Breast epithelium (tissue), 4 donors: ENCODE measurements at regions of chr18 and their contacts with region 1.

Region 1: DNA sequence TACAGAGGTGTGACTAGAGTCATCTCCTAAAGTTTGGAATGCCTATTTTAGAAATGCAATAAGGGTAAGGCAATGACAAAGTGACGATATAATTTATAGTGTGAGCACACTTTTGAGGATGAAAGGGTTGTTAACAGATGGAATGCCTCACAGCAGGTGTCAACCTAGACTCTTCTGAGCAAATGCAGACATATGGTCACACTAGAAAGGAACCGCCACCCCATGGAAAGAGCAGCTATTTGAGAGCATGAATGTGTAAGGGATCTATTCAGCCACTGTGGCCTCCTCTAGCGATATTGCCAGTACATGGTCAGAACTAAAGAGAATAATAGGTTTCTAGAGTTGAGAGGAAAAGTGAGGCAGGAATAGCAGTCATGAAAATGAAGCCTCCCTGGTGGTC is 18.5 kb downstream of the DSG2 start:
- DNase-seq: no peak
- H3K4me3 ChIP-seq: no peak overlapping the region
- H3K27ac ChIP-seq: no peak overlapping the region
- H3K4me1 ChIP-seq: peaks cover 0 to 12% of the 10 kb centered on the region in 2 donors
- H3K27me3 ChIP-seq: no peaks in the 10 kb centered on the region
- CTCF ChIP-seq: no peak
- POLR2A ChIP-seq: no peak

Region 2: GRCh38 chr18:30971338-30971956 is 545.0 kb before region 1 on chr18:
- intact Hi-C with region 1: no loop called
- DNase-seq: no peak
- H3K4me3 ChIP-seq: no peak overlapping the region
- H3K27ac ChIP-seq: no peak overlapping the region
- H3K4me1 ChIP-seq: no peaks in the 10 kb centered on the region
- H3K27me3 ChIP-seq: no peaks in the 10 kb centered on the region
- CTCF ChIP-seq: peak; percentile 40 to 59 (median 56)
- POLR2A ChIP-seq: no peak

Region 3: GRCh38 chr18:31325051-31325450 is 191.4 kb before region 1 on chr18:
- intact Hi-C with region 1: no loop called
- DNase-seq: no peak
- H3K4me3 ChIP-seq: no peak overlapping the region
- H3K27ac ChIP-seq: no peak overlapping the region
- H3K4me1 ChIP-seq: no peaks in the 10 kb centered on the region
- H3K27me3 ChIP-seq: no peaks in the 10 kb centered on the region
- CTCF ChIP-seq: no peak
- POLR2A ChIP-seq: no peak

Region 4: GRCh38 chr18:31407649-31408048 is 108.8 kb before region 1 on chr18:
- intact Hi-C with region 1: no loop called
- DNase-seq: no peak
- H3K4me3 ChIP-seq: no peak overlapping the region
- H3K27ac ChIP-seq: no peak overlapping the region
- H3K4me1 ChIP-seq: no peaks in the 10 kb centered on the region
- H3K27me3 ChIP-seq: no peaks in the 10 kb centered on the region
- CTCF ChIP-seq: no peak
- POLR2A ChIP-seq: no peak

Region 5: DNA sequence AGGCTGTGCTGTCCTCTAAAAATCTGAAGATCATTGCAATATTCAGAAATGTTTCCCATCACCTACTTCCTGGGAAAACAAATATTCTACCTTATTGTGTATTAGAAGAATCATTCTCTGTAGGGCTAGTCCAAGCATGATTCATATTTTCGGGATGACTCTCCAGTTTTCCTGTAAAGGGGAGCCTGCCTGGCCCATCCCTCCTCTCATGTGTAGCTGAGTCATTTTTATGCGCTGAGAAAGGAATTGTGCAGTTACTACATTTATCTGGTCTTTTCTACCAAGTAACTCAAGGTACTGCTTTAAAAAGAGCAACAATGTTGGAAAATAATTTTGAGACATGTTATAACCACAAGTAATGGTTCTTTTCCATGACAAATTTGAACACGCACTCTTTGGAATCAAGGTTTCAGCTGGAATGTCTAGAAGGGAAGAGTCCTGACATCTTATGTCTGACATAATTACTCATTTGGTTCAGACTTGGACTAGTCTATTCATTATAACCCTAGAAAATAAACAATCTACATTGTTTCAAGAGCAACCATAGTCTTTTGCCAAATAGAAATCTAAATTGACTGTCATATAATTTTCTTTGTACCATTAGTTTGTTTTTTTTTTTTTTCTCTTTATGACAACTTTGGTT is 62.2 kb before region 1 on chr18:
- intact Hi-C with region 1: no loop called
- DNase-seq: peak in 1 of 2 donors; percentile 54
- H3K4me3 ChIP-seq: no peak overlapping the region
- H3K27ac ChIP-seq: peak overlapping the region; percentile 63 to 74
- H3K4me1 ChIP-seq: no peaks in the 10 kb centered on the region
- H3K27me3 ChIP-seq: no peaks in the 10 kb centered on the region
- CTCF ChIP-seq: no peak
- POLR2A ChIP-seq: no peak

Region 6: GRCh38 chr18:31469629-31470028 is 46.8 kb before region 1 on chr18:
- intact Hi-C with region 1: loop called (anchors 2 kb)
- DNase-seq: no peak
- H3K4me3 ChIP-seq: no peak overlapping the region
- H3K27ac ChIP-seq: no peak overlapping the region
- H3K4me1 ChIP-seq: no peaks in the 10 kb centered on the region
- H3K27me3 ChIP-seq: no peaks in the 10 kb centered on the region
- CTCF ChIP-seq: no peak
- POLR2A ChIP-seq: no peak